ENCODE measurements at regions of chrX and their contacts with region 1.

Region 1: GRCh38 chrX:132219343-132219768 is at the start of gene RAP2C:
- DNase-seq: peak in 33 of 35 experiments; percentile 17 to 74 (median 36)
- ATAC-seq: peak in 2 of 4 experiments; percentile 28 to 33
- H3K4me3 ChIP-seq: peak within 1 kb of the TSS; percentile 71 to 80
- H3K4me3 Mint-ChIP-seq: peak within 1 kb of the TSS; percentile 82 to 87 (median 83)
- H3K27ac ChIP-seq: peak within 1 kb of the TSS; percentile 96
- H3K27ac Mint-ChIP-seq: peak within 1 kb of the TSS; percentile 89 to 94
- H3K4me1 ChIP-seq: peaks cover 13 to 20% of the 10 kb centered on the region in 2 experiments
- H3K4me1 Mint-ChIP-seq: peaks cover 18 to 28% (median 27%) of the 10 kb centered on the region in 3 donors
- H3K27me3 ChIP-seq: no peaks in the 10 kb centered on the region
- H3K27me3 Mint-ChIP-seq: peaks cover 0 to 17% of the 10 kb centered on the region in 2 donors
- total RNA-seq, gene RAP2C: 22.5 to 43.0 (median 26.8) TPM

Region 2: GRCh38 chrX:132041015-132041414 is 178.3 kb before region 1 on chrX:
- CTCF ChIA-PET with region 1: no interaction called
- POLR2A ChIA-PET with region 1: no interaction called
- DNase-seq: no peak
- ATAC-seq: no peak
- H3K4me3 ChIP-seq: no peak overlapping the region
- H3K4me3 Mint-ChIP-seq: no peak overlapping the region
- H3K27ac ChIP-seq: no peak overlapping the region
- H3K27ac Mint-ChIP-seq: no peak overlapping the region
- H3K4me1 ChIP-seq: peaks cover 0 to 5% of the 10 kb centered on the region in 2 experiments
- H3K4me1 Mint-ChIP-seq: peaks cover 65 to 69% (median 65%) of the 10 kb centered on the region in 3 donors
- H3K27me3 ChIP-seq: no peaks in the 10 kb centered on the region
- H3K27me3 Mint-ChIP-seq: peaks cover 0 to 23% of the 10 kb centered on the region in 2 donors

Region 3: GRCh38 chrX:132092439-132093065 is 126.8 kb before region 1 on chrX:
- CTCF ChIA-PET with region 1: interaction called in 1 of 2 experiments, 30 read pairs
- POLR2A ChIA-PET with region 1: no interaction called
- DNase-seq: peak; percentile 7 to 72 (median 31)
- ATAC-seq: peak; percentile 52 to 79 (median 64)
- H3K4me3 ChIP-seq: no peak overlapping the region
- H3K4me3 Mint-ChIP-seq: no peak overlapping the region
- H3K27ac ChIP-seq: no peak overlapping the region
- H3K27ac Mint-ChIP-seq: no peak overlapping the region
- H3K4me1 ChIP-seq: no peaks in the 10 kb centered on the region
- H3K4me1 Mint-ChIP-seq: peaks cover 0 to 9% (median 2%) of the 10 kb centered on the region in 3 donors
- H3K27me3 ChIP-seq: no peaks in the 10 kb centered on the region
- H3K27me3 Mint-ChIP-seq: peaks cover 4 to 40% of the 10 kb centered on the region in 2 donors

Region 4: DNA sequence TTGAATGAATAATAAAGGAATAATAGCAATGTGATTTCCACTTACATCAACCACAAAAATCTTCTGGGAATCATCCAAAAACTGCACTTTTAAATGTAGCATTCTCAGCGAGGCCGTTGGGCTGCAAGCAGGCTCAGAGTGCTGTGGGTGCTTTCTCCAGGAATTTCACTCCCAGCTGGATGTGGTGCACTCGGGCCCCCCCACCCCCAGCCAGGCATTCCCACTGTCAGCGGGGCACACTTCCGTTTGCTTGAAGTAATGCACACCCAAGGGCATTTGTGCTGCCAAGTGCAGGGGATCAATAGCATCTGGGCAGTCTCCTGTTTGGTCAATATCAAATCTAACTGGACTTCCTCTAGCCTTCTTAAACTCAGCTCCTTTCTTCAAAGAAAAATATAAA is 91.6 kb before region 1 on chrX and contains the start of gene FRMD7:
- CTCF ChIA-PET with region 1: no interaction called
- POLR2A ChIA-PET with region 1: no interaction called
- DNase-seq: no peak
- ATAC-seq: no peak
- H3K4me3 ChIP-seq: no peak within 1 kb of the TSS
- H3K4me3 Mint-ChIP-seq: no peak within 1 kb of the TSS
- H3K27ac ChIP-seq: no peak within 1 kb of the TSS
- H3K27ac Mint-ChIP-seq: no peak within 1 kb of the TSS
- H3K4me1 ChIP-seq: no peaks in the 10 kb centered on the region
- H3K4me1 Mint-ChIP-seq: no peaks in the 10 kb centered on the region
- H3K27me3 ChIP-seq: no peaks in the 10 kb centered on the region
- H3K27me3 Mint-ChIP-seq: peaks cover 7 to 37% of the 10 kb centered on the region in 2 donors
- total RNA-seq, gene FRMD7: not detected

Region 5: DNA sequence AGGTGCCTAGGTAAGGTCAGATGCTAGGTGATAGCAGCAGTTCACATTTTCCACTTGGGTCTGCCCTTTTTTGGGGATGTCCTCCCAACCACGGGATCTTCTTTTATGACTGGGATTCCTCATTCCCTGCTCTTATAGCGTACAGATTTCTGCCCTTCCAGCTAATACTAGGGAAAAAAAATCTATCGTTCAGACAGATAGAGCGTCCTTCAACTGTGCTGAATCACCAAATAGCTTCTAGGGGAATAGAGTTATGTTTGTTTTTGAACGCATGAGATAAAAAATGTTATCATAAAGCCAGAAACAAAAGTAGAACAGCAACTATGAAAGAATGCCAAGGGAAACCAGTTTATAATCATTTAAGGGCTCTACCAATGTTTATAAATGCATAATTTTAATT is 13.1 kb before region 1 on chrX:
- CTCF ChIA-PET with region 1: interaction called in 1 of 2 experiments, 10 read pairs
- POLR2A ChIA-PET with region 1: interaction called in 1 of 2 experiments, 6 read pairs
- DNase-seq: no peak
- ATAC-seq: no peak
- H3K4me3 ChIP-seq: no peak overlapping the region
- H3K4me3 Mint-ChIP-seq: no peak overlapping the region
- H3K27ac ChIP-seq: no peak overlapping the region
- H3K27ac Mint-ChIP-seq: no peak overlapping the region
- H3K4me1 ChIP-seq: peaks cover 3 to 7% of the 10 kb centered on the region in 2 experiments
- H3K4me1 Mint-ChIP-seq: peaks cover 37 to 46% (median 40%) of the 10 kb centered on the region in 3 donors
- H3K27me3 ChIP-seq: no peaks in the 10 kb centered on the region
- H3K27me3 Mint-ChIP-seq: peaks cover 0 to 12% of the 10 kb centered on the region in 2 donors

Region 6: DNA sequence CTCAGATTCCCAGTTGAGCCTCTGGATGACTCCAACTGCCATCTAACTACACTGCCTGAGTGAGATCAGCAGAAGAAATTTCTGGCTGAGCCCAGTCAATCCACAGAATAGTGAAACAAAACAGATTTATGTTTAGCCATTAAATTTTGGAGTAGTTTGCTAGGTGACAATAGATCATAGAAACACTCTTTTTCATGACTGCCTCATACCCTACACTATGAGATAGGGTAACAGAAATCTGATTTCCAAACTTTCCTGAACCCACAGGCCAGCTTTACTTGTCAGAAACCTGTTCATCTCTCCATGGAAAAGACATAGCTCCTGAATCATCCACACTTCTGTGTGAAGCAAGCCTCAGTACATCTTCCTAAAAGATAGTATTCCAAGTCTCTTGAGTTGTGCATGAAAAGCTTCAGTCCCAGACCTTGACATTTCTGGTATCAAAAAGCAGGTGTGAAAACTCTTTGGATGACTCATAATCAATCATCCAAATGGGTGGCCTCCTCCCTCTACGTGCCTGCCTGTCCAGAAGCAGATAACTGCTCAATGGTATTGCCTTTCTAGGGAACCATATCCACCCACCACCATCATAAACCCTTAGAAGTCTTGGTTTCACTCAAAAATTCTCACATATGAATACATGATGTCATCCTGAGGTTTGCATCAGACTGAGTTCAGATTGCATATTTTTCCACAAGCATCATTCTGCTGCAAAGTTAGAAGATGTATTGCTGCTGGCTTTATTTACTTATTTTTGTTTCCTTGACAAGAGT is 47.4 kb after region 1 on chrX:
- CTCF ChIA-PET with region 1: no interaction called
- POLR2A ChIA-PET with region 1: no interaction called
- DNase-seq: no peak
- ATAC-seq: no peak
- H3K4me3 ChIP-seq: no peak overlapping the region
- H3K4me3 Mint-ChIP-seq: no peak overlapping the region
- H3K27ac ChIP-seq: no peak overlapping the region
- H3K27ac Mint-ChIP-seq: no peak overlapping the region
- H3K4me1 ChIP-seq: no peaks in the 10 kb centered on the region
- H3K4me1 Mint-ChIP-seq: no peaks in the 10 kb centered on the region
- H3K27me3 ChIP-seq: no peaks in the 10 kb centered on the region
- H3K27me3 Mint-ChIP-seq: peaks cover 0 to 21% of the 10 kb centered on the region in 2 donors

Region 7: DNA sequence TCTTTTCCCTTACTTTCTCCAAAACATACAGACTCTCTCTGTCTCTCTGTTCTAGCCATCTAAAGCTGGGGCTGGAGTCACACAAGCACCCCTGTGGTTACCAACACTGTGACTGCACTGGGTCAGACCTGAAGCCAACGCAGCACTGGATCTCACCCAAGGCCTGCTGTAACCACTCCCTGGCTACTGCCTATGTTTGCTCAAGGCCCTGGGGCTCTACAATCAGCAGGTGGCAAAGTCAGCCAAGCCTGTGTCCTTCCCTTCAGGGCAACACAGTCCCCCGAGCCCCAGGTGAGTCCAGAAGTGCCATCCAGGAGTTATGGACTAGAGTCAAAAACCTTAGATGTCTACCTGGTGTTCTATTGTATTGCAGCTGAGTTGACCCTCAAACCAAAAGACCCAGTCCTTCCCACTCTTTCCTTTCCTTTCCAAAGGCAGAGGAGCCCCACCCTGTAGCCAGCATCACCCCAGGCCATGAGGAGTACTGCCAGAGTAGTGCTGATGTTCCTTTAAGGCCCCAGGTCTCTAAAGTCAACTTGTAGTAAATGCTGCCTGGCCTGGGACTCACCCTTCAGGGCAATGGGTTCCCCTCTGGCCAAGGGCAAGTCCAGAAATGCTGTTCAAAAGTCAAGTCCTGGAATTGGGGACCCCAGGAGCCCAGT is 58.7 kb after region 1 on chrX:
- CTCF ChIA-PET with region 1: no interaction called
- POLR2A ChIA-PET with region 1: no interaction called
- DNase-seq: no peak
- ATAC-seq: no peak
- H3K4me3 ChIP-seq: no peak overlapping the region
- H3K4me3 Mint-ChIP-seq: no peak overlapping the region
- H3K27ac ChIP-seq: no peak overlapping the region
- H3K27ac Mint-ChIP-seq: no peak overlapping the region
- H3K4me1 ChIP-seq: no peaks in the 10 kb centered on the region
- H3K4me1 Mint-ChIP-seq: no peaks in the 10 kb centered on the region
- H3K27me3 ChIP-seq: no peaks in the 10 kb centered on the region
- H3K27me3 Mint-ChIP-seq: peaks cover 0 to 10% of the 10 kb centered on the region in 2 donors